Posterior vena cava (tissue), 2 donors: ENCODE measurements at regions of chr7 and their contacts with region 1.

Region 1: DNA sequence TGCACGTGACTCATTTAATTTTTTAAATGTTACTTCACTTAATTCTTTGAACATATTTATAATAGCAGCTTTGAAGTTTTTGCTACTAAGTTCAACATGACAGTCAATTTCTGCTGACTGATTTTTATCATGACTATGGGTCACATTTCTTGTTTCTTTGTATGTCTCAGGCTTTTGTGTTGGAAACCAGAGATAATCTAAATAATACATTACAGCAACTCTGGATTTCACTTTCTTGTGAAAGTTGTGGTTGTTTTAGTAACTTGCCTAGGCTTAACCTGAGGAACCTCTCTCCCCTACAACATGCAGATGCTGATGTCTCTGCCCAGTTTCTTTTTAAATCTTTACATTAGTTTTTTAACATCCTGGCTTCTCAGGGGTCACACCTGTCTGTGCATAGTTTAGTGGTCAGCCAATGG is 180.8 kb downstream of the CCDC71L start:
- DNase-seq: no peak

Region 2: GRCh38 chr7:106535234-106536026 is 55.3 kb after region 1 on chr7:
- intact Hi-C with region 1: loop called in 1 of 2 experiments (anchors 2 kb)
- DNase-seq: no peak